ENCODE measurements at regions of chr22 and their contacts with region 1.

Region 1: GRCh38 chr22:41822317-41823060 is 10.4 kb upstream of the SREBF2 start:
- DNase-seq: no peak
- ATAC-seq: peak in 3 of 4 donors; percentile 27 to 53 (median 47)
- H3K4me3 ChIP-seq: no peak overlapping the region
- H3K27ac ChIP-seq: no peak overlapping the region
- H3K4me1 ChIP-seq: peaks cover 23% of the 10 kb centered on the region
- H3K27me3 ChIP-seq: no peaks in the 10 kb centered on the region
- CTCF ChIP-seq: peak; percentile 56

Region 2: DNA sequence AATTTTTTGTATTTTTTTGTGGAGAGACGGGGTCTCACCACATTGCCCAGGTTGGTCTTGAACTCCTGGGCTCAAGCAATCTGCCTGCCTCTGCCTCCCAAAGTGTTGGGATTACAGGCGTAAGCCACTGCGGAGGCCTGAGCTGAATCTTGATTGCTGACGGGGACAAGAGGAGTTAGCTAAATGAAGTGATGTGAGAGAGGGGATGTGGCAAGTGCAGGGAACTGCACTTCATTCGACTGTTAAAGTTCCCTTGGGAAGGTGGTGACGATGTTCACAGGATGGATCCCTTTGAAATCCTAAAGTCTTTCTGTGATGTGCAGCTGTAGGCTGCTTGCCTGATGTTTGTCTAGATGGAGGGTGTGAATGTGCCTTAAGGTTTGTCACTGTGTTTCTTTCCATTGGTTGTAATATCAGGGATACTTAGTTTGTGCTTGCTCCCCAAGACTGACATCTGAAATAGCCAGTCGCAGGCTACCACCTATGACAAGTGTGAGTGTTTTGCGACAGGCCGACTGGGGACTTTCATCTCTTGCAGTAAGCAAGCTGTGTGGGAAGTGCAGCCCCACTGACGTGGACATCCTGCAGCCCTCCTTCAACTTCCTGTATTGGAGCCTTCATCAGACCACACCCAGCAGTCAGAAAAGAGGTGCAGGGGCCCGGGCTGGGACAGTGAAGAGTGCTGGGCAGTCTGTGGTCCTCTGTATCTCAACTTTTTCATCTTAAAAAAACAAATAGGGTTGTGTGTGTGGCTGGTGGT is 41.6 kb before region 1 on chr22:
- intact Hi-C with region 1: no loop called
- DNase-seq: peak; percentile 56 to 80
- ATAC-seq: peak in 2 of 4 donors; percentile 42 to 51
- H3K4me3 ChIP-seq: no peak overlapping the region
- H3K27ac ChIP-seq: no peak overlapping the region
- H3K4me1 ChIP-seq: no peaks in the 10 kb centered on the region
- H3K27me3 ChIP-seq: no peaks in the 10 kb centered on the region
- CTCF ChIP-seq: no peak

Region 3: DNA sequence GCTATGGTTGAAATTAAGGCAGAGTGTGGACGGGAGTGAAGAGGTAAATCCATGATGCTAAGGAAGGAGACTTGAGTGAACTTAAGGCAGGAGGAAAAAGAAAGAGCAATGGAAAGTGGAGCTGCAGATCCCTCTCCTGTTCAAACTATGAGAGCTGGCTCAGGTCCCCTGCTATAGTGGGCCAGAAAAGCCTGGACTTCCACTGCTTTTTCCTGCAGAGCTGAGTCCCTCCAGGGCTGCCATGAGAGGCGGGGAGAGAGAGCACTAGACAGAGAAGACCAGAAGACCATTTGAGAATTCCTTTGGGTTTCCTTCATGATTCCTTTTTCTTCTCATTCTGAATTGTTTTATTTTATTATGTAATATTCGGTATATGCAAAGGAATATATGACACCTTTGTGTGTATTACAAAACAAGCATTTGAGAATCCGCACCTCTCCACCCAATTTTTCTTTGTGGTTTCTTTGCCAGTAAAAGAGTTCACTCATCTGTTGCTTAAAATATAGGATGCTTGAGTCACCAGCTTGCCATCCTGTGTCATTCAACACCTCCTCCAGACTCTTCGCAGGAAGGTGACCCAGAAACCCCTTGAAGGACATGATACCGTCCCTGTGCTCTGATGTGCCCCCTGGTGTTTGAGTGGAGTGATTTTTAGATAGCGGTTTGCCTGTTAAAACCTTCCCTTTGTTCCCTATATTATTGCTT is 34.8 kb after region 1 on chr22:
- intact Hi-C with region 1: loop called in 1 of 2 experiments (anchors 5 kb)
- DNase-seq: peak in 1 of 2 donors; percentile 39
- ATAC-seq: peak; percentile 86 to 88 (median 87)
- H3K4me3 ChIP-seq: no peak overlapping the region
- H3K27ac ChIP-seq: peak overlapping the region; percentile 61
- H3K4me1 ChIP-seq: peaks cover 25% of the 10 kb centered on the region
- H3K27me3 ChIP-seq: no peaks in the 10 kb centered on the region
- CTCF ChIP-seq: peak; percentile 53

Region 4: DNA sequence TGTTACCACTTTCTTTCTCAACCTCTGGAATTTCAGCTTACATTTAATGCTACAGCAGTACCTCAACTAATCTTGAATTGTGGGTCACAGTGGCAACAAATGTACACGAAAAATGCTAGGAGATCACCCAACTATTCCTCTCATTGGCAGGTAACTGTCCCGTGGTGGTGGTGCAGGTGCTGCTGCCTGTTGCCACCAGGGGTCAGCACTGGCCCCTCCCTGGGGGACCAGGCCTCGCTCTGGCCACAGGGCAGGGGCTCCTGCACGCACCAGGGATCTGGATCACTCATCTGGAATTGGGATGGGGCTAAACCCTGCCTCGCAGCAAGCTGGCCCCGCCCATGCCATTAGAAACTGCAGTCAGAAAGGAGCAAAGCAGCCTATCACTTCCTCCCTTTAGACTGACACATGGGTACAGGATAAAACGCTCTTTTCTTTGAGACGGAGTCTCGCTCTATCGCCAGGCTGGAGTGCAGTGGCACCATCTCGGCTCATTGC is 799.1 kb after region 1 on chr22:
- intact Hi-C with region 1: no loop called
- DNase-seq: peak; percentile 78 to 90
- ATAC-seq: peak; percentile 78 to 84 (median 81)
- H3K4me3 ChIP-seq: no peak overlapping the region
- H3K27ac ChIP-seq: peak overlapping the region; percentile 64
- H3K4me1 ChIP-seq: peaks cover 14% of the 10 kb centered on the region
- H3K27me3 ChIP-seq: no peaks in the 10 kb centered on the region
- CTCF ChIP-seq: peak; percentile 93

Measured in psoas muscle (tissue), 8 donors.